AG04449 (cell line): ENCODE measurements at regions of chr11 and their contacts with region 1.

Region 1: GRCh38 chr11:9802291-9802861 is 138.5 kb downstream of the SWAP70 start:
- DNase-seq: peak; percentile 93
- H3K4me3 ChIP-seq: no peak overlapping the region
- CTCF ChIP-seq: no peak

Region 2: DNA sequence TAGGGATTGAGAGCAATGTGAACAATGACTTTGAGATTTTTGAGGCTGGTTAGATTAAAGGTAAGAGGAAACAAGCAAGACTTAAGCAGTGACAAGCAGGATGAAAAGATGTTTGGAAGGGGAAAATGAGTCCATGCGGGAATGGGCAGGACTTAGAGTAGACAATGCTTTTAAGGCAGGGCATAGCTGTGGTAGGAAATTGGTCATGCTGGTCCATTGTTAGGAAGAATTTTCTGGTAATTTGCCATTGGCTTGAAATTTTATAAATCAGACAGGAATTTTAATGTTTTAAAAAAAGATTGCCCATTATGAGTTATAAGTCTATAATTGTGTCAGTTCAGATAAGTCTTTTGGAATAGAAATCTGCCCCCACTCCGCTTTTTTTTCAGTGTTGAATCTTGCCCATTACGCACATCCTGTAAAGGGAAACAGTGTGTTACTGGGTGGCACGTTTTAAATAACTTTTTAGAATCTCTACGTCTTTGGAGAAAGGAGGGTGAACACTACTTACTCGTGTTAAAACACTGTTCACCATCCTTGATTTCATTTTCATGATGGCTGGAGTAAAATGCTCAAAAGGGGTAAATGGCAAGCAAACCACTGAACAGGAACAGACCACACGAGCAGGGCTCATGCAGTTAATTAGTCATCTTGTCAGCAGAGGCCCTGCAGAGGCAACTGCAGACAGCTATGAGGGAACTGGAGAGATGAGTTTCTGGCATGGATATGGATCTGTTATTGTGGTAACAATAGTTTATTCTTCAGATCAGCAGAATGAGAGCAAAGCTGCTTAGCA is 113.5 kb before region 1 on chr11:
- CTCF ChIA-PET with region 1: no interaction called
- POLR2A ChIA-PET with region 1: no interaction called
- DNase-seq: no peak
- H3K4me3 ChIP-seq: no peak overlapping the region
- CTCF ChIP-seq: no peak

Region 3: GRCh38 chr11:9787981-9788521 is 14.3 kb before region 1 on chr11:
- CTCF ChIA-PET with region 1: interaction called, 7 read pairs
- POLR2A ChIA-PET with region 1: interaction called, 10 read pairs
- DNase-seq: peak; percentile 55
- H3K4me3 ChIP-seq: no peak overlapping the region
- CTCF ChIP-seq: no peak

Region 4: GRCh38 chr11:9943386-9944110 is 141.2 kb after region 1 on chr11:
- CTCF ChIA-PET with region 1: no interaction called
- POLR2A ChIA-PET with region 1: no interaction called
- DNase-seq: peak; percentile 94
- H3K4me3 ChIP-seq: no peak overlapping the region
- CTCF ChIP-seq: no peak

Region 5: DNA sequence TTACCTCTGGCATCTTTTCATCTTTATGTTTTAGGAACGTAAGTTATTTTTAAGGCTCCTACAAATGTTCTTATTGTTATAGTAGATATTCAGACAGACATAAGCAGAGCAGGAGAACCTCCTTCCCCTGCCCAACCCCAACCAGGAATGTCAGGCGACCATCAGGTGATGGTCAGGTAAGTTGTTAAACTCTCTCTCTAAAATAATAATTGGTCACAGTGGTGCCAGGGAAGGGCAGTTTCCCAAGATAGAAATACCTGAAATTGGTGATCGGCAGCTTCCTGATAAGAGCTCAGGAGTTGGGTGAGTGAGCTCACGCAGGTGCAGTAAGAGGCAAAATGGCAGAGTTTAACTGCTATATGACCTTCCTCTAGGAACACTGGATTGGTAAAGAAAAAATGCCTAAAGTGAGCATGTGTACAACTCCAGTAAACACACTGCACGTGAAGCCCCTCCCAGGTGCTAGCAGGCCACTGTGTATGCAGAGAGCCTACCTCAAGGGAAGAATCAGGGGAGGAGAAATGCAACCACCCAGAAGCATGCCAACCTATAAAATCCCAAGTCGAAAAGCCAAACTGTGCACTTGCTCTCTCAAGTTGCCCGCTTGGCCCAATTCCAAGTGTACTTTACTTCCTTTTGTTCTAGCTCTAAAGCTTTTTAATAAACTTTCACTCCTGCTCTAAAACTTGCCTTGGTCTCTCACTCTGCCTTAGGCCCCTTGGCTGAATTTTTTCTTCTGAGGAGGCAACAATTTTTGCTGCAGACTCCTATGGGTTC is 217.7 kb after region 1 on chr11:
- CTCF ChIA-PET with region 1: no interaction called
- POLR2A ChIA-PET with region 1: no interaction called
- DNase-seq: no peak
- H3K4me3 ChIP-seq: no peak overlapping the region
- CTCF ChIP-seq: no peak